ENCODE measurements at regions of chr17 and their contacts with region 1.

Region 1: GRCh38 chr17:10149573-10150399 is 48.6 kb downstream of the GAS7 start:
- DNase-seq: peak; percentile 86 to 96 (median 95)
- H3K4me3 ChIP-seq: peak overlapping the region in 1 of 3 experiments; percentile 47
- H3K4me3 Mint-ChIP-seq: peak overlapping the region; percentile 21 to 68
- H3K27ac ChIP-seq: peak overlapping the region; percentile 95 to 97
- H3K27ac Mint-ChIP-seq: peak overlapping the region; percentile 95 to 100 (median 98)
- H3K4me1 ChIP-seq: peaks cover 70 to 90% of the 10 kb centered on the region in 2 donors
- H3K4me1 Mint-ChIP-seq: peaks cover 75% of the 10 kb centered on the region
- H3K27me3 ChIP-seq: no peaks in the 10 kb centered on the region
- H3K27me3 Mint-ChIP-seq: peaks cover 0 to 3% (median 0%) of the 10 kb centered on the region in 3 donors
- CTCF ChIP-seq: no peak

Region 2: GRCh38 chr17:10115071-10115539 is 34.7 kb before region 1 on chr17:
- intact Hi-C with region 1: loop called in 1 of 2 experiments (anchors 2 kb)
- DNase-seq: peak; percentile 94 to 98 (median 96)
- H3K4me3 ChIP-seq: peak overlapping the region; percentile 1 to 62 (median 27)
- H3K4me3 Mint-ChIP-seq: peak overlapping the region; percentile 75 to 89
- H3K27ac ChIP-seq: peak overlapping the region; percentile 98 to 99
- H3K27ac Mint-ChIP-seq: peak overlapping the region; percentile 99 to 100 (median 100)
- H3K4me1 ChIP-seq: peaks cover 74 to 82% of the 10 kb centered on the region in 2 donors
- H3K4me1 Mint-ChIP-seq: peaks cover 85% of the 10 kb centered on the region
- H3K27me3 ChIP-seq: no peaks in the 10 kb centered on the region
- H3K27me3 Mint-ChIP-seq: peaks cover 0 to 9% (median 2%) of the 10 kb centered on the region in 3 donors
- CTCF ChIP-seq: no peak

Measured in CD14-positive monocyte (primary cell).